ENCODE measurements at regions of chr4 and their contacts with region 1.

Region 1: DNA sequence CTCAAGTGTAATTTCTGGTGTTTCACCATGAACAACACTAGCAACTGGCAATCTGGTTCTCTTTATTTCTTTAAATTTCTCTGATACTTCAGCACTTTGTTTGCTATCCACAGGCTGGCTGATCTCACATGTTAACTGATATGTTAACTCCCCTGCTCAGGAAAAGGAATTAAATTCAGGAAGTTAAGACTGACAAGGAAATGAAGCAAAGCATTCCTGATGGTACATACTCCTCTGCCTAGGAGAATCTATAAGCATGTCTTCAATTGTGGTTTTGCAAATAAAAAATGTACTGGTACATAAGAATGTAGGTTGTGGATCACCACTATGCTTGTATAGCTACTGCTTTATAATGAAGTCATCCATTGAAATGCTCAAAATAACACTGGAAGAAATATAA is 1119.2 kb upstream of the INTU start:
- DNase-seq: no peak
- H3K4me3 ChIP-seq: no peak overlapping the region
- H3K27ac ChIP-seq: no peak overlapping the region
- H3K4me1 ChIP-seq: no peaks in the 10 kb centered on the region
- H3K27me3 ChIP-seq: no peaks in the 10 kb centered on the region
- CTCF ChIP-seq: no peak
- POLR2A ChIP-seq: no peak

Region 2: GRCh38 chr4:127103681-127104115 is 590.1 kb after region 1 on chr4:
- intact Hi-C with region 1: loop called (anchors 5 kb)
- DNase-seq: no peak
- H3K4me3 ChIP-seq: no peak overlapping the region
- H3K27ac ChIP-seq: no peak overlapping the region
- H3K4me1 ChIP-seq: no peaks in the 10 kb centered on the region
- H3K27me3 ChIP-seq: no peaks in the 10 kb centered on the region
- CTCF ChIP-seq: no peak
- POLR2A ChIP-seq: no peak

Measured in vagina (tissue), 2 donors.